Activated T-helper 1 cell treated with anti-CD3 and anti-CD28 coated beads, Interleukin-12 subunit alpha, Interleukin-12 subunit beta, Interleukin-2, Interleukin-4 antibody, amounts not matched to agents 30 ng/mL and 10 ng/mL and 1 ng/mL, durations not matched to agents 14 hours and 24 hours and 36 hours (primary cell): ENCODE measurements at regions of chr17 and their contacts with region 1.

Region 1: DNA sequence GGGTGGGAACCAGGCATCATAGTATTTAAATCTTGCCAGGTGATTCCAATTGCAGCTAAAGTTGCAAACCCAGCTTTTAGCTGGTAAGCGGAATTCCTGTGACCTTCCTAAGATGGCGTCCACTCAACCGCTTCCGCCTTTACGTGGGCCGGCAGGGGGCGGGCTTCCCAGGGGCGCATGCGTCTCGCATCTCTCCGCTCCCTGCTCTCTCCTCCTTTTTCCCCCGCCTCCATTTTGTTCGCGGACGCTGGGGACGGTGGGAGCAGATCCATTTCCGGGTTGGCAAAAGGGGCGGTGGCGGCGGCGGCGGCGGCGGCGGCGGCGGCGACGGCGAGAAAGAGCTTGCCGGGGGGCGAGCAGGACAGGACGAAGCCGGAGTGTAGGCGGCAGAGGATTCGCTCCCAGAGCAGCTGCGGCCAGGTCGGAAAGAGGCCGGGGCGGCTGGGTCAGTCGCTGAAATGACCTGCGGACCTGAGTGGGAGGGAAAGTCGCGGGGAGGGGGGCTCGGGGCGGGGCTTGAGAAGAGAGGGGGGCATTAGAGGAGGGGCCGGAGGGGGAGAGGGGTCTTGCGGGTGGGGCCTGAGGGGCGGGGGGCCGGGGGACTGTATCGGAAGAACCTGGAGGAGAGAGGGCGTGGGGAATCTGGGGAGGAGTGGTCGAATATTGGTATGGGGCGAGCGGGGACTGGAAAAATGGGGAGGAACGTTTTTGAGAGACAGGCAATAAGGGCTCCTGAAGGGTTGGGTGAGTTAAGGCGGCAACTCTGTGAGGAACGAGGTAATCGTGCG is at the start of gene WIPF2:
- DNase-seq: peak; percentile 96
- H3K4me3 Mint-ChIP-seq: peak within 1 kb of the TSS; percentile 95
- H3K27ac Mint-ChIP-seq: peak within 1 kb of the TSS; percentile 100
- H3K4me1 Mint-ChIP-seq: peaks cover 33% of the 10 kb centered on the region
- H3K27me3 Mint-ChIP-seq: no peaks in the 10 kb centered on the region
- total RNA-seq, gene WIPF2: 25.8 and 27.6 TPM in 2 replicates

Region 2: GRCh38 chr17:39981766-39982371 is 237.4 kb before region 1 on chr17:
- intact Hi-C with region 1: no loop called
- DNase-seq: no peak
- H3K4me3 Mint-ChIP-seq: peak overlapping the region; percentile 96
- H3K27ac Mint-ChIP-seq: peak overlapping the region; percentile 92
- H3K4me1 Mint-ChIP-seq: peaks cover 32% of the 10 kb centered on the region
- H3K27me3 Mint-ChIP-seq: peaks cover 6% of the 10 kb centered on the region

Region 3: DNA sequence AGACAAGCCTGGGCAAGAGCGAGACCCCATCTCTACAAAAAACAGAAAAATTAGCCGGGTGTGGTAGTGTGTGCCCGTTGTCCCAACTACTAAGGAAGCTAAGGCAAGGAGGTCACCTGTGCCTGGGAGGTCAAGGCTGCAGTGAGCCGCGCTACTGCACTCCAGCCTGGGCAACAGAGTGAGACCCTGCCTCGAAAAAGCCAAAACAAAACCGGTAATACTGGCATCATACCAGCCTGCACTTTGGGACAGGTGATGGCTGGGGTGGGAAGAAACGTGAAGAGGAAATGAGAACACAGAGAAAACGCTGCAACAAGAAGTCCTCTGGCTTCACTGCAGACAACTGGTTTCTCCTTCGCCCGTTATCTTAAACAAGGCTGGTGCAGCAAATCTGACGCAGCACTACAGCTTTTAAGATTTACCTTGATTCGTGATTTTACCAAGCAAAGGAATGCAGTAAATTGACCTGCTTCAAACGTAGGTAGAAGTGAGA is 79.7 kb before region 1 on chr17:
- intact Hi-C with region 1: loop called (anchors 1 kb)
- DNase-seq: no peak
- H3K4me3 Mint-ChIP-seq: peak overlapping the region; percentile 98
- H3K27ac Mint-ChIP-seq: peak overlapping the region; percentile 98
- H3K4me1 Mint-ChIP-seq: peaks cover 34% of the 10 kb centered on the region
- H3K27me3 Mint-ChIP-seq: peaks cover 2% of the 10 kb centered on the region

Region 4: GRCh38 chr17:40153603-40154236 is 65.5 kb before region 1 on chr17:
- intact Hi-C with region 1: loop called (anchors 1 kb)
- DNase-seq: no peak
- H3K4me3 Mint-ChIP-seq: no peak overlapping the region
- H3K27ac Mint-ChIP-seq: peak overlapping the region; percentile 98
- H3K4me1 Mint-ChIP-seq: peaks cover 51% of the 10 kb centered on the region
- H3K27me3 Mint-ChIP-seq: no peaks in the 10 kb centered on the region

Region 5: DNA sequence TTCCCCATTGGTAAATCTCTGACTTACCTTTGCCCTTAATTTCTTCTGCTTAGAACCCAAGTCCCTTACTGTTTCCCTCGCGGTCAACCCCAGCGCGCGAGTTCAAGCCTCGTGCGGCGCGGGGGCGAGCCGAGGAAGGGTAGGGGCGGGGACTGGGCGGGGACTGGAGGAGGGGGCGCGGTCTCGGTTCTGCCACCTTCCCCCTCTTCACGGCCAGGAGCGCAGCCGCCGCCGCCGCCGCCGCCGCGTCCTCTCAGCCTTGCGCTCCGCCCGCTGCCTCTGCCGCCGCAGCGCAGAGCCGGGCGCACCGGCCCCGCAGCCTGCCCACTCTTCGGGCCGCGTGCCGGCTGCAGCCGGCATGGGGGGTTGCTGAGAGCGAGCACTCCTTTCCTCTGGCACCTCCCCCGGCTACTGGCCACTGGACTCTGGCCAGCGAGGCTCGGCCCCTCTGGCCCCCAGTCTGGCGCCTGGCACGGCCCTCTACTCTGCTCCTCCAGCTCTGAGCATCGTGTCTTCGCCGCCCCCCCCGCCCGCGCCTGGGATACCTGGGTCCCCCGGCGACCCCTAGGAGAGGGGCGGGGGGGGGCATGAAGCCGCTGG is 41.9 kb before region 1 on chr17 and contains the start of gene RAPGEFL1:
- intact Hi-C with region 1: loop called (anchors 2 kb)
- DNase-seq: peak; percentile 69
- H3K4me3 Mint-ChIP-seq: peak within 1 kb of the TSS; percentile 51
- H3K27ac Mint-ChIP-seq: peak within 1 kb of the TSS; percentile 70
- H3K4me1 Mint-ChIP-seq: peaks cover 8% of the 10 kb centered on the region
- H3K27me3 Mint-ChIP-seq: no peaks in the 10 kb centered on the region
- total RNA-seq, gene RAPGEFL1: 11.8 and 13.0 TPM in 2 replicates

Region 6: DNA sequence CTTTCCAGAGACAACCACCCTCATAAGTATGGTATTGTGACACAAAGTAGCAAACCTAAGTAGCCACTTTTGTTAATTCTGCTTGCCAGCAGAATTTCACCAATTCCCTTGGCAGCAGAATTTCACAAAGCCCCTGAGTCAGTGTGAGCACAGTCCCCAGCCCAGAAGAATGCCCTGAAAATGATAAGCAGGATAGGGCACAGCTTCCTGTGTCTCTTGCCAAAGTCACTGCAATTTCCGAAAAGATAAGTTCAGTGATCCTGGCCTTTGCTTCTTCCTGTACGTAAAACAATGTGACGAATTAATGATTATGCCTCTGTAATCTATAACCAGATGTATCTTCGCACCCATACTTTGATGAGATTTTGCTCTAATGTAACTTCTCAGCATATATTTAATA is 16.1 kb before region 1 on chr17:
- intact Hi-C with region 1: loop called (anchors 2 kb)
- DNase-seq: no peak
- H3K4me3 Mint-ChIP-seq: no peak overlapping the region
- H3K27ac Mint-ChIP-seq: no peak overlapping the region
- H3K4me1 Mint-ChIP-seq: no peaks in the 10 kb centered on the region
- H3K27me3 Mint-ChIP-seq: peaks cover 18% of the 10 kb centered on the region

Region 7: DNA sequence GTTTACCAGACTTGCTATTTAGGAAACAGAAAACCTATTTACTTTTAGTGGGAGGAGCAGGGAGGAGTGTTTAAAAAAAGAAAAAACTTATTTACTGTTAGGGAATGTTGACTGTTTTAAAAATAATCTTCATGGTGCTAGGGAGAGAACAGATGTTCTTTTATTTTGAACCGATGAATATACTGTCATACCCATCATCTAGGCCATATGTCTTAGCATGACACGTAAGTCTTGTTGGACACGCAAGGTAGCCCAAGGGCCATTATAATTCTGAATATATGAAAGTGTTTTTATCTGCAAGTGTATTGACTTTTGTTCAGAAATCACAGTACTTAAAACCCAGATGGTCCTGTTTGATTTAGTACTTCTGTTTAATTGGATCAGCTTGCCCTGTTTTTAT is 11.4 kb after region 1 on chr17:
- intact Hi-C with region 1: no loop called
- DNase-seq: no peak
- H3K4me3 Mint-ChIP-seq: no peak overlapping the region
- H3K27ac Mint-ChIP-seq: no peak overlapping the region
- H3K4me1 Mint-ChIP-seq: no peaks in the 10 kb centered on the region
- H3K27me3 Mint-ChIP-seq: no peaks in the 10 kb centered on the region

Region 8: DNA sequence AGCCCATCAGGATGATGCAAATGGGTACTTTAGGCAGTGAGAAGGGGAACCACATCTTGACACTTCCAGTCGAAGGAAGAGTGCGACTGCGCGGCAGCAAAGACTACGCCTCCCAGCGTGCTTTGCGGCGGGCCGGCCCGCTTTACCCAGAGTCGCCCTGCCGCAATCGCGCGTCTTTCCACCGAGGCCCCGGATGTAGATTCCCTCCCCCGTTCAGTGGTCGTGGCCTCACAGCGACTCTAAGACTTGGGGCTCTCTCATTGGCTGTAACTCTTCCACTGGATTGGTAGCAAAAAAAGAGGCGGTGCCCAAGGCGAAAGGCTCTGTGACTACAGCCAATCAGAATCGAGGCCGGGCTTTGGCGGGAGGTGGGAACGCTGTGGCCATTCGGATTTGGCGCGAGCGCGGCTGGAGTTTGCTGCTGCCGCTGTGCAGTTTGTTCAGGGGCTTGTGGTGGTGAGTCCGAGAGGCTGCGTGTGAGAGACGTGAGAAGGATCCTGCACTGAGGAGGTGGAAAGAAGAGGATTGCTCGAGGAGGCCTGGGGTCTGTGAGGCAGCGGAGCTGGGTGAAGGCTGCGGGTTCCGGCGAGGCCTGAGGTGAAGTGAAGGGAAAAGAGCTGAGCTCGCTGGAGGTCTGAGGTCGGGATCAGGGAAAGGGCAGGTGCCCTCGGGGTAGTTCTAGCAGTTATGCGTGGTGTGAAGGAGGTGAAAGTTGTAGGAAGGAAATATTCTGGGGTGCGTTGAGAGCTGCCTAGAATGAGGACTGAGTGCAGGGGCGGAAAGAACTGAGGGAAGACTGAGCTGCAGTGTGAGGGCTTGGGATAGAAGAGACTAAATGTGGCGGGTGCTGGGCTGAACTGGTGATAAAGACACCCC is 68.5 kb after region 1 on chr17 and contains the start of gene CDC6:
- intact Hi-C with region 1: loop called (anchors 1 kb)
- DNase-seq: peak; percentile 98
- H3K4me3 Mint-ChIP-seq: peak within 1 kb of the TSS; percentile 99
- H3K27ac Mint-ChIP-seq: peak within 1 kb of the TSS; percentile 98
- H3K4me1 Mint-ChIP-seq: peaks cover 39% of the 10 kb centered on the region
- H3K27me3 Mint-ChIP-seq: no peaks in the 10 kb centered on the region
- total RNA-seq, gene CDC6: 130 and 135 TPM in 2 replicates

Region 9: DNA sequence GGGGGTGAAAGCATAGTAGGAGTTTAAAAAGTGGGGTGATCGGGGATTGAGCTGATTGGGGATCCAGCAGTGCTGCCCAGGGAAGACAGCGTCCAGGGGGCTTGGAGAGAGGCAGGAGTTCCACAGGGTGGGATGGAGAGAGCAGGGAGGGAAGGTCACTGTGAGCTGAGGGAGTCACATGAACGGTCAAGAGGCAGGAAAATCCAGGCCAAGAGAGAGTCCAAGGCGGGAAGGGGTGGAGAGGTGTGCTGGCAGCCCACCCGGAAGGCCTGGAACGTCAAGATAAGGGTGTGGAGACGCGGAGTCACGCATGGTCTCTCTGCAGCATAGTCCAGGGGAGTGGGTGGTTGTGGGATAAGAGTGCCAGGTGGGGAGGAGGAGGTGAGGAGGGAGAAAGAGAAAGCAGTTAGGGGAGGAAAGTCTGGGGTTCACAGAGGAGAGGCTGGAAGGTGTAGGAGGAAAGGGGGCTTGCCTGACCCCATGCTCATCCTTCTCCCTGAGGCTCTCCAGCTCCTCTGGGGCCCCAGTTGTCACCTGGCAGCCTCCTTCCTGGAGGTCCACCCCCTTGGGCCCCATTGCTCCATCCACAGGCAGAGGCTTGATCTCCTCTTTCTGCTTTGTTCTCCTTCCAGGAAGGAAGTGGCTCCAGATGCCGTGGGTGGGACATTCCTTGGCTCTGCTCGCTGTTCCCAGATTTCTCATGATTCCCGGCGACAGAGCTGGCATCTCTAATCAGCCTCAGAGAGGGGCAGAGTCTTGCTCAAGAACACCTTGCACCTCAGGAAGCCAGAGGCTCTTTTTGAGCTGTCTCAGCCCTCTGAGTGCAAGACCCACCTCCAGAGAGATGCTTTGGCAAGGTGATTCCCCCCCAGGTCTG is 317.3 kb after region 1 on chr17:
- intact Hi-C with region 1: loop called (anchors 10 kb)
- DNase-seq: no peak
- H3K4me3 Mint-ChIP-seq: peak overlapping the region; percentile 1
- H3K27ac Mint-ChIP-seq: peak overlapping the region; percentile 56
- H3K4me1 Mint-ChIP-seq: peaks cover 94% of the 10 kb centered on the region
- H3K27me3 Mint-ChIP-seq: no peaks in the 10 kb centered on the region